ENCODE measurements at regions of chr17 and their contacts with region 1.

Region 1: GRCh38 chr17:48113201-48113676 is 5.7 kb downstream of the SNX11 start:
- DNase-seq: peak; percentile 30
- ATAC-seq: no peak
- H3K4me3 Mint-ChIP-seq: peak overlapping the region; percentile 99
- H3K27ac Mint-ChIP-seq: peak overlapping the region; percentile 99
- H3K4me1 Mint-ChIP-seq: peaks cover 58% of the 10 kb centered on the region
- H3K27me3 Mint-ChIP-seq: no peaks in the 10 kb centered on the region
- CTCF ChIP-seq: no peak

Region 2: GRCh38 chr17:48054238-48055185 is 58.7 kb before region 1 on chr17:
- CTCF ChIA-PET with region 1: interaction called, 4 read pairs
- POLR2A ChIA-PET with region 1: interaction called, 63 read pairs
- intact Hi-C with region 1: no loop called
- DNase-seq: no peak
- ATAC-seq: no peak
- H3K4me3 Mint-ChIP-seq: peak overlapping the region; percentile 73
- H3K27ac Mint-ChIP-seq: peak overlapping the region; percentile 99
- H3K4me1 Mint-ChIP-seq: peaks cover 75% of the 10 kb centered on the region
- H3K27me3 Mint-ChIP-seq: no peaks in the 10 kb centered on the region
- CTCF ChIP-seq: no peak

Region 3: GRCh38 chr17:48066656-48067055 is 46.6 kb before region 1 on chr17:
- CTCF ChIA-PET with region 1: no interaction called
- POLR2A ChIA-PET with region 1: no interaction called
- intact Hi-C with region 1: no loop called
- DNase-seq: no peak
- ATAC-seq: no peak
- H3K4me3 Mint-ChIP-seq: no peak overlapping the region
- H3K27ac Mint-ChIP-seq: peak overlapping the region; percentile 13
- H3K4me1 Mint-ChIP-seq: no peaks in the 10 kb centered on the region
- H3K27me3 Mint-ChIP-seq: no peaks in the 10 kb centered on the region
- CTCF ChIP-seq: no peak

Region 4: DNA sequence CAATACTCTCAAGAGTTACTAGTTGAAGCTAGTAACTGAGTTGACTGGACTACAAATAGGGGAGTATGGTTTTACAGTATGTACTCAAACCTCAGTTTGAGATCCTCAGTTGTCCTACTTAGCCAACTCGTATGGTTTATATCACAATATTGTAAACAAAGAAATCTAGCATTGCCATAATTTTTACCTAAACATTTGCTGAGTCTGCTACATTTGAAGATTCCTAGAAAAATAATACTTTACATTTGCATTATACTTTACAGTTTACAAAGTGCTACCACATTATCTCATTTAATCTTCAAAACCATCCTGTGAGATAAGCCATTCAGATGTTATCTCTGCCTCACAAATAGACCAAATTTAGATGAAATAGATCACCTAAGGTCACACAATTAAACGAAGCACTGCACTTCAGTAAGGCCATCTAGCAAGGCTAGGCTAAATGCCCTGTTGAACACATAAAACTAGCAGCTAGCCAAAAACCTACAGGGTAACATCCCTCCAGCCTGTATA is 28.3 kb before region 1 on chr17:
- CTCF ChIA-PET with region 1: interaction called, 29 read pairs
- POLR2A ChIA-PET with region 1: interaction called, 8 read pairs
- intact Hi-C with region 1: no loop called
- DNase-seq: no peak
- ATAC-seq: no peak
- H3K4me3 Mint-ChIP-seq: no peak overlapping the region
- H3K27ac Mint-ChIP-seq: no peak overlapping the region
- H3K4me1 Mint-ChIP-seq: peaks cover 5% of the 10 kb centered on the region
- H3K27me3 Mint-ChIP-seq: no peaks in the 10 kb centered on the region
- CTCF ChIP-seq: no peak

Region 5: DNA sequence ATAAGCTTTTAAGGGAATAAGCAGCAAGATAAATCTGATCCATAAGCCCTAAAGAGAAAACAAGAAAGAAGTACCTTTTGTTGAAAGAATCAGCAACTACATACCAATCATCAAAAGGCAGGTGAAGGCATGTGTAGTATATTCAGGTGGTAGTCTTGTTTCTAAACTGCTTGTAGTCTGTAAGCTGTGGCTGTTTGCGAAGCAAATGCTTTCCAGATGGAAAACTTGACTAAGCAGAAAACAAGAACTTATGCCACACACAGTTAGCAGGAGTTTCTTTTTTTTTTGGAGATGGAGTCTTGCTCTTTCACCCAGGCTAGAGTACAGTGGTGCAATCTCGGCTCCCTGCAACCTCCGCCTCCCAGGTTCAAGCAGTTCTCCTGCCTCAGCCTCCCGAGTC is 17.6 kb before region 1 on chr17:
- CTCF ChIA-PET with region 1: interaction called, 31 read pairs
- POLR2A ChIA-PET with region 1: interaction called, 83 read pairs
- intact Hi-C with region 1: no loop called
- DNase-seq: no peak
- ATAC-seq: no peak
- H3K4me3 Mint-ChIP-seq: no peak overlapping the region
- H3K27ac Mint-ChIP-seq: no peak overlapping the region
- H3K4me1 Mint-ChIP-seq: peaks cover 21% of the 10 kb centered on the region
- H3K27me3 Mint-ChIP-seq: no peaks in the 10 kb centered on the region
- CTCF ChIP-seq: no peak

Region 6: GRCh38 chr17:48101012-48101720 is 12.1 kb before region 1 on chr17 and contains the start of gene CBX1:
- CTCF ChIA-PET with region 1: interaction called, 31 read pairs
- POLR2A ChIA-PET with region 1: interaction called, 83 read pairs
- intact Hi-C with region 1: loop called (anchors 1 kb)
- DNase-seq: peak; percentile 92
- ATAC-seq: peak; percentile 92
- H3K4me3 Mint-ChIP-seq: peak within 1 kb of the TSS; percentile 94
- H3K27ac Mint-ChIP-seq: peak within 1 kb of the TSS; percentile 92
- H3K4me1 Mint-ChIP-seq: peaks cover 50% of the 10 kb centered on the region
- H3K27me3 Mint-ChIP-seq: no peaks in the 10 kb centered on the region
- CTCF ChIP-seq: no peak
- total RNA-seq, gene CBX1: 46.0 and 49.5 TPM in 2 replicates

Region 7: DNA sequence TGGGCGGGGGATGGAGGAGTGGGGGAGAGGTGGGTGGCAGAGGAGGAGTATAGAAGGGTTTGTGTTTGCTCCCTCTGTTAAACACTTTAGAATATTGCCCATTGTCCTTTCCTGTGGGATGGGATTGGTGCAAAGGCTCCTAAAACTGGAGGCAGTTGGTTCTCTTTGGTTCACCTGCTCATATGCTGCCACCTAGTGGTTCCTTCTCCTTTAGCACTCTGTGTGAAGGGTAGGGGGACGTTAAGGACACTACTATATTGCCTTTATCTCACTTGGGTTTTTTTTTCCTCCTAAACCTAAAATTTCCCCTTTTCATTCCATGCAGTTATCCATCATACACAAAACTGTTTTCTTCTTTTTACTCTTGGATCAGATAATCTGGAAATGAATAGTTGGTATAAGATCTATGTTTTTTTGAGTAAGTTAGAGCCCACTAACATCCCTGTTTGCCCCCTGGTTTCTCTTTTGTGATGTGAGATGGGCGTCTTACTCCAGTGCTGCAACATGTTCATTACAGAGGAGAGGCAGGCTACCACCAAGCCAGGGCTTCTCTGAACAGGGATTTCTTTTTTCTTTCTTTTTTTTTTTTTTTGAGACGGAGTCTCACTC is 18.1 kb after region 1 on chr17:
- CTCF ChIA-PET with region 1: interaction called, 13 read pairs
- POLR2A ChIA-PET with region 1: interaction called, 15 read pairs
- intact Hi-C with region 1: loop called (anchors 1 kb)
- DNase-seq: no peak
- ATAC-seq: peak; percentile 83
- H3K4me3 Mint-ChIP-seq: no peak overlapping the region
- H3K27ac Mint-ChIP-seq: no peak overlapping the region
- H3K4me1 Mint-ChIP-seq: peaks cover 4% of the 10 kb centered on the region
- H3K27me3 Mint-ChIP-seq: no peaks in the 10 kb centered on the region
- CTCF ChIP-seq: no peak

Region 8: GRCh38 chr17:48153691-48154358 is 40.6 kb after region 1 on chr17:
- CTCF ChIA-PET with region 1: no interaction called
- POLR2A ChIA-PET with region 1: no interaction called
- intact Hi-C with region 1: no loop called
- DNase-seq: no peak
- ATAC-seq: no peak
- H3K4me3 Mint-ChIP-seq: no peak overlapping the region
- H3K27ac Mint-ChIP-seq: no peak overlapping the region
- H3K4me1 Mint-ChIP-seq: no peaks in the 10 kb centered on the region
- H3K27me3 Mint-ChIP-seq: no peaks in the 10 kb centered on the region
- CTCF ChIP-seq: no peak

Region 9: GRCh38 chr17:48194097-48194550 is 80.9 kb after region 1 on chr17:
- CTCF ChIA-PET with region 1: no interaction called
- POLR2A ChIA-PET with region 1: no interaction called
- intact Hi-C with region 1: no loop called
- DNase-seq: no peak
- ATAC-seq: no peak
- H3K4me3 Mint-ChIP-seq: no peak overlapping the region
- H3K27ac Mint-ChIP-seq: no peak overlapping the region
- H3K4me1 Mint-ChIP-seq: peaks cover 6% of the 10 kb centered on the region
- H3K27me3 Mint-ChIP-seq: no peaks in the 10 kb centered on the region
- CTCF ChIP-seq: no peak

Region 10: GRCh38 chr17:48228721-48229120 is 115.5 kb after region 1 on chr17:
- CTCF ChIA-PET with region 1: no interaction called
- POLR2A ChIA-PET with region 1: no interaction called
- intact Hi-C with region 1: no loop called
- DNase-seq: no peak
- ATAC-seq: no peak
- H3K4me3 Mint-ChIP-seq: no peak overlapping the region
- H3K27ac Mint-ChIP-seq: no peak overlapping the region
- H3K4me1 Mint-ChIP-seq: no peaks in the 10 kb centered on the region
- H3K27me3 Mint-ChIP-seq: peaks cover 2% of the 10 kb centered on the region
- CTCF ChIP-seq: no peak

Measured in activated B cell treated with CpG ODN at 0.5 μM for 24 hours (primary cell).